ENCODE measurements at regions of chr7 and their contacts with region 1.

Region 1: GRCh38 chr7:50664461-50664922 is 99.3 kb upstream of the DDC start:
- DNase-seq: peak; percentile 47
- H3K4me3 Mint-ChIP-seq: no peak overlapping the region
- H3K27ac Mint-ChIP-seq: no peak overlapping the region
- H3K4me1 Mint-ChIP-seq: peaks cover 62% of the 10 kb centered on the region
- H3K27me3 Mint-ChIP-seq: no peaks in the 10 kb centered on the region

Region 2: GRCh38 chr7:50156706-50157105 is 507.8 kb before region 1 on chr7:
- CTCF ChIA-PET with region 1: no interaction called
- intact Hi-C with region 1: loop called (anchors 1 kb)
- DNase-seq: no peak
- H3K4me3 Mint-ChIP-seq: peak overlapping the region; percentile 50
- H3K27ac Mint-ChIP-seq: peak overlapping the region; percentile 92
- H3K4me1 Mint-ChIP-seq: peaks cover 45% of the 10 kb centered on the region
- H3K27me3 Mint-ChIP-seq: no peaks in the 10 kb centered on the region

Region 3: GRCh38 chr7:50595491-50596102 is 68.9 kb before region 1 on chr7:
- CTCF ChIA-PET with region 1: no interaction called
- intact Hi-C with region 1: loop called (anchors 1 kb)
- DNase-seq: peak; percentile 16
- H3K4me3 Mint-ChIP-seq: no peak overlapping the region
- H3K27ac Mint-ChIP-seq: no peak overlapping the region
- H3K4me1 Mint-ChIP-seq: peaks cover 15% of the 10 kb centered on the region
- H3K27me3 Mint-ChIP-seq: peaks cover 2% of the 10 kb centered on the region

Region 4: DNA sequence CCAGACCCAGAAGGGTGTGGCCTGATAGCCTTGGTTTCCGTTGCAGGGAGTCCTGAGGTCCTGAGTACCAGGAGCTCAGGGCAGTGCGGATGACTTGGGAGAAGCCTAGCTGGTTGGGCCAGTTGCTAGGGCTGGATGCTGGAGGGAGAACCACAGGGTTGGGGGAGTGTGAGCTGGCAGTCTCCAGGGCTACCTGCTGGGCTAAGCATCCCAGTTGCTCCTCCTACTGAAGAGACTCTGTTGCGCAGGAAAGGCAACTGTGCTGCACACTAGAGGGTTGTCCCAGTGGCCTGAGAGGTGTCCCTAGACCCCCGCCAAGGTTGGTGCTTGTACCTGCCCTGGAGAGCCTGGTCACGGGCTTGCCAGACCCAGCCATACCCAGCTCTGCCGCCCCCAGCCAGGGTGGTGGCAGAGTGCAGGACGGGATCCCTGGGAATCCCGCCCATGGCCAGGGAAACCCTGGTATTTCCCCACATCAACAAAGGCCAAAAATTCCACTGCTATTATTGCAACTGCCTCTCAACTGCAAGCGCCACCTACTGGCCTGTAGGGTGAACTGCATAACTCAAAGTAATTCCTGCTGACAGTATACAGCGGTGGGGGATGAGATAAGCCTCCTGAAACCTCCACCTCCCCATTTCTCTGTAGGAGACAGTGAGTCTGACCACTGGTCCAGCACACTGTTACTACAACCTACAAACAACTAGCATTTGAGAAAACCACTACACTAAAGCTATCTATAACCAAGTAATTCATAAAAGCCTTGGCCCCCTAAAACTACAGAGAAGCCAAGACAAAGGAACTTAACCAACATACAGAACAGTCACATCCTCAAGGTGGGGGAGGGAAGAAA is 31.7 kb before region 1 on chr7:
- CTCF ChIA-PET with region 1: interaction called, 11 read pairs
- intact Hi-C with region 1: loop called (anchors 2 kb)
- DNase-seq: peak; percentile 70
- H3K4me3 Mint-ChIP-seq: no peak overlapping the region
- H3K27ac Mint-ChIP-seq: no peak overlapping the region
- H3K4me1 Mint-ChIP-seq: no peaks in the 10 kb centered on the region
- H3K27me3 Mint-ChIP-seq: peaks cover 2% of the 10 kb centered on the region

Region 5: GRCh38 chr7:50793115-50793946 is 128.8 kb after region 1 on chr7:
- CTCF ChIA-PET with region 1: no interaction called
- intact Hi-C with region 1: loop called (anchors 2 kb)
- DNase-seq: peak; percentile 40
- H3K4me3 Mint-ChIP-seq: peak overlapping the region; percentile 63
- H3K27ac Mint-ChIP-seq: no peak overlapping the region
- H3K4me1 Mint-ChIP-seq: peaks cover 17% of the 10 kb centered on the region
- H3K27me3 Mint-ChIP-seq: peaks cover 26% of the 10 kb centered on the region

Region 6: DNA sequence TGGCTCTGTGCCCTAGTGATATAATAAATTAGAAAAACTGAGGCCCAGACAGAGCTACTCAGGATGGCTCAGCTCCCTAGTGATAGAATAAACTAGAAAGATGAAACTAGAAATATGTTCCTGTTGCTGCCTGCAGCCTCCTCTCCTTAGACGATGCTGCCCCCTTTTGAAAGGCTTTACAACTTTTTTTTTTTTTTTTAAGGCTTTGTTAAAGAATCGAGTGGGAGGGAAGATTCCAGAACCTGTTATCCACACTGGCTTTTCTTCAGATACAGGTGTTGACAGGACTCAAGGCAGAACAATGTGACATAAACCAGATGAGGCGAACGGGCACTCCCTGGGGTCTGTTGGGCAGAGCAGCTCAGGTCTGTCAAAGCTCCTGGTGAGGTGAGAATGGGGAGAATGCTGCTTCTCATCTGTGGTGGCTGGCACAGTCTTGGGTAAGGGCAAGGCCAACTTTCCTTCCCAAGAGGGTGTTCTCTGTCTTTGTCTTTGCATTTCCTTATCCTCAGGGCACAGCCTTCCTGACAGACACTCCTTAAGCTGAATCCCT is 477.0 kb after region 1 on chr7:
- CTCF ChIA-PET with region 1: no interaction called
- intact Hi-C with region 1: loop called (anchors 5 kb)
- DNase-seq: peak; percentile 31
- H3K4me3 Mint-ChIP-seq: no peak overlapping the region
- H3K27ac Mint-ChIP-seq: no peak overlapping the region
- H3K4me1 Mint-ChIP-seq: peaks cover 14% of the 10 kb centered on the region
- H3K27me3 Mint-ChIP-seq: no peaks in the 10 kb centered on the region

Measured in activated naive CD4-positive, alpha-beta T cell treated with anti-CD3 and anti-CD28 coated beads for 36 hours (primary cell).